Panc1 (cell line): ENCODE measurements at regions of chr3 and their contacts with region 1.

Region 1: DNA sequence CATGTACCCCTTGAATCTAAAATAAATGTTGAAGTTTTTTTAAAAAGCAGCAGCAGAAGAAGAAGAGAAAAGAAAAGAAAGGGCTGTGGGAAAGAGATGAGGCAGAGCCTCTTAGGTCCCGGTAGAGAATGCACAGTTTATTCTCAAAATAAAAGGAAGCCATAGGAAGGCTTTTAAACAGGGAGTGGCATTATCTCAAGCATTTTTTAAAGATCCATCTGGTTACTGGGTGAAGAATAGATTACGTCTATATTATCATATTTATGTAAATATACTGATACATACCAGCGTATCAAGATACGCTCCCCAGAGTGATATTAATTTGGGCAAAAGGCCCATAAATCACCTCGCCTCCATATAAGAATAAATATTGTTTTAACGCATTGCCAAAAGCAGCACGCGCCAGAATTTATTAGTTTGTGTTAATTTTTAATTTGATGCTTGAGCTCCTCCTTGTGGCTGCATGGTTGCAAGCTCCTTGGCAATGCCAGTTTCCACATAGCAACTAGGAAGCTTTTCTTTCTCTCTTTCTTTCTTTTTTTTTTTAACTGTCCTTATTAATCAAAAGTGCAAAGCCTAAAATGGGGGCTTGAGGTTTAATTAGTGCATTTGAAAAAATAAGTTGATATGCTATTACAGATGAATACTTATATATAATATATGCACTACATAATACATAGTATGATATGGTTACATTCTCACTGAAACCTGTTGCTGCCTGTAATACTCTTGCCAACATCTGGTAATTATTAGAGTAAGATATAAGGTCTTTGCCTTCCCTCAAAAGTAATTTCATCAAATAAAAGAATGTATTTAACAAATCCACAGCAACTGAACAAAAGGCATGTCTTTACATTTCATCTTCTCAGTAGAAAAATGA is 242.8 kb upstream of the UBE2E2 start:
- DNase-seq: peak; percentile 15
- ATAC-seq: no peak
- H3K4me3 ChIP-seq: no peak overlapping the region
- H3K27ac ChIP-seq: no peak overlapping the region
- H3K4me1 ChIP-seq: no peaks in the 10 kb centered on the region
- H3K27me3 ChIP-seq: no peaks in the 10 kb centered on the region
- CTCF ChIP-seq: peak; percentile 74

Region 2: GRCh38 chr3:22729985-22730384 is 230.4 kb before region 1 on chr3:
- CTCF ChIA-PET with region 1: no interaction called
- POLR2A ChIA-PET with region 1: no interaction called
- in situ Hi-C with region 1: no loop called
- intact Hi-C with region 1: loop called (anchors 10 kb)
- DNase-seq: no peak
- ATAC-seq: no peak
- H3K4me3 ChIP-seq: no peak overlapping the region
- H3K27ac ChIP-seq: no peak overlapping the region
- H3K4me1 ChIP-seq: no peaks in the 10 kb centered on the region
- H3K27me3 ChIP-seq: no peaks in the 10 kb centered on the region
- CTCF ChIP-seq: peak; percentile 24; the same call in 1 of the 2 replicates

Region 3: DNA sequence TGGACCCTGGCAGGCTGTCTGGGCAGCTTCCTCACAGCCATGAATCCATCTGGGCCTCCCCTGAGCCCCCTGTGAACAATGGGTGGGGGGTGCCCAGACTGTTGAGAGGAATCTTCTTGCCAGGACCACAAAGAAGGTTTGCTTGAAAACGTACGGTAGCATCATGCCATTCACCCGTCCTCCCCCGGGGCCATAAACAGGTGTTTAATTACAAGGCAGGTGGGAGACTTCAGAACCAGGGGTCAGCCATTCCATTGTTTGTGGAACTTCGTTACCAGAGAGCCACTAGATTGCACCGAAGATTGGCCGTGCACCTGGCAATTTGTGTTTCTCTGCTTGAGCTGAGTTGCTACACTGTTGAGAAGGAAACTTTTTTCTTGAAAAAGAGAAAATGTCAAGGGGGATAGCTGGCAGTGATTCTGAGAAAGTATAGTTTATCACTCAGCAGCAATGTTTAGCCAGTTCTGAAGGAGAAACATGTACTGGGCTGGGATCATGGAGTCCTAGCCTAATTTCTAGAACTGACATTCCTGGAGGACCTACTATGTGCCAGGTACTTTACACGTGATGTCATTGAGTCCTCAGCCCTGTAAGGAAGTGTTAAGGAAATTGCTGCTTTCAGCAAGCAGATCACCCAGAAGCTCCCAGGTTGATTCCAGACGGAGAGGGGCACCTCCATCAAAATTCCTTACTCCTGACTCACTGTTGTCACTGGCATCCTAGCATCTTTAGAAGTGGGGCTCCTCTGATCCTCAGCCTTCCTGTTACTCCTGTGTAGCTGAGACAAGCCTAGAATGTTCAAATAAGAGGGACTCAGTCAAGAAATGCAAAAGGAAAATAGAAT is 741.6 kb after region 1 on chr3:
- CTCF ChIA-PET with region 1: no interaction called
- POLR2A ChIA-PET with region 1: no interaction called
- in situ Hi-C with region 1: no loop called
- intact Hi-C with region 1: no loop called
- DNase-seq: no peak
- ATAC-seq: 0 out of 2 replicates have a peak, but pooled peaks have one; percentile 54
- H3K4me3 ChIP-seq: no peak overlapping the region
- H3K27ac ChIP-seq: peak overlapping the region; percentile 39; the same call in 1 of the 2 replicates
- H3K4me1 ChIP-seq: peaks cover 8% of the 10 kb centered on the region
- H3K27me3 ChIP-seq: no peaks in the 10 kb centered on the region
- CTCF ChIP-seq: no peak